Common myeloid progenitor, CD34-positive (primary cell): ENCODE measurements at regions of chr15 and their contacts with region 1.

Region 1: DNA sequence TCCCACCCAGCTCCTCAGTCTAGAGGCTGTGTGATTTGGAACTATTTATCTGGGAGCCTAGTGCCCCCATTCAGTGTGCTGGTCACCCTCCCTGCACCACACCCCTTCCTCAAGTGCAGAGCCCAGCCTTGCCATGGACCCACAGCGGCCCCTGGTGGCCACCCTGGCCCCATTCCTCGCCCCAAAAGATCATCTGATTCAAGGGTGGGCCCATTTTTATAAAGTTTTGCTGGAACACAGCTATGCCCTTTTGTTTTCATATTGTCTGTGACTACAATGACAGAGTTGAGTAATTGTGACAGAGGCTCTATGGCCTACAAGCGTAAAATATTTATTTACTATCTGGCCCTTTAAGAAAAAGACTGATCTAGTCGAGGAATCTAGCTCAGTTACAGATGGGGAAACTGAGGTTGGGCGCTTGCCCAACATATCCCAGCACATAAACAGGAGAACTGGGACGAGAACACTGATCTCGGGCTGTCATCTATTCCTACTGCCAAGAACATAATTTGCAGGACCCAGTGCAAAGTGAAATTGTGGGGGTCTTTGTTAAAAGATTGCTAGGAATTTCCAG is 1.8 kb downstream of the FES start:
- DNase-seq: peak; percentile 79 to 90 (median 86)
- H3K4me3 ChIP-seq: peak overlapping the region in 5 of 7 experiments; percentile 70 to 86 (median 83)
- H3K27ac ChIP-seq: no peak overlapping the region
- H3K4me1 ChIP-seq: peaks cover 0 to 44% (median 40%) of the 10 kb centered on the region in 4 experiments
- H3K27me3 ChIP-seq: no peaks in the 10 kb centered on the region

Region 2: DNA sequence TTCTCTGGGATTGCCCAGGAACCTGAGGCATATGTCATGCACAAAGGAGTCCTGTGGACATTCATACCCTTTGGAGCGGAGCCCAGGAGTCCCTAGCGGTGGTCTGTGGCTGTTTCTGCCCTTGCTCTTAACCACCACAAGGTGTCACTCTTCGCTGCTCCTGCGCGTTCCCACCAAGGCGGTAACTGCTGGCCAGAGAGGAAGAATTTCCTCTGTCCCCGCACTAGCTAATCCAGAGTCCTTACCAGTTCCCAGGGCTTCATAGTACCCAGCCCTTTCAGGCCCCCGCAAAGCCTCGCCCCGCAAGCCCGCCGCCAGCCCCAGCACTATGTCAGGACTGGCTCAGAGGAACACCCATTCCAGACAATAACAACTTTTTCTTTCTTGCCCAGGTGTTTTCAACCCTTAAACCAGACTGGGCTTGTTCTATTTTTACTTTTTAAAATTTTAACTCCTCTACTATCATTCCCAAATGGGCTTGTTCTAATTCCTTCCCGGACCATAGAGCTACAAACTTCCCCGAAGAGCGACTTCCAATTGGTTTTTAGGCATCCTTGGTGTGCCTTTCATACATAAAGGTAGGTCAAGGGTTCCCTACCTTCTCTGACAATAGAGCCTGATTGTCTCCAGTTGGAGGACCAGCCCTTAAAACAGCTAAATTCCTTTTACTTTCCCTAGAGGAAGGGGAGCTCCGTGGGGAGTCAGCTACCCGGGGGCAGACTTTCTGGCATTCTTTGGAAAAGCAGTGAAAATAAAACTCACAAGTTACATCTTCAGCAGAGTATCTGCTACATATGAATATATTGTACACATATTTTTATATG is 565.9 kb before region 1 on chr15:
- CTCF ChIA-PET with region 1: interaction called, 11 read pairs
- POLR2A ChIA-PET with region 1: no interaction called
- DNase-seq: peak; percentile 77 to 87 (median 83)
- H3K4me3 ChIP-seq: peak overlapping the region in 5 of 7 experiments; percentile 27 to 48 (median 35)
- H3K27ac ChIP-seq: no peak overlapping the region
- H3K4me1 ChIP-seq: peaks cover 0 to 5% (median 2%) of the 10 kb centered on the region in 4 experiments
- H3K27me3 ChIP-seq: peaks cover 0 to 2% (median 0%) of the 10 kb centered on the region in 5 experiments

Region 3: GRCh38 chr15:90701880-90702630 is 184.1 kb before region 1 on chr15:
- CTCF ChIA-PET with region 1: interaction called, 24 read pairs
- POLR2A ChIA-PET with region 1: no interaction called
- DNase-seq: peak; percentile 59 to 71 (median 62)
- H3K4me3 ChIP-seq: no peak overlapping the region
- H3K27ac ChIP-seq: no peak overlapping the region
- H3K4me1 ChIP-seq: peaks cover 0 to 32% (median 18%) of the 10 kb centered on the region in 4 experiments
- H3K27me3 ChIP-seq: no peaks in the 10 kb centered on the region

Region 4: DNA sequence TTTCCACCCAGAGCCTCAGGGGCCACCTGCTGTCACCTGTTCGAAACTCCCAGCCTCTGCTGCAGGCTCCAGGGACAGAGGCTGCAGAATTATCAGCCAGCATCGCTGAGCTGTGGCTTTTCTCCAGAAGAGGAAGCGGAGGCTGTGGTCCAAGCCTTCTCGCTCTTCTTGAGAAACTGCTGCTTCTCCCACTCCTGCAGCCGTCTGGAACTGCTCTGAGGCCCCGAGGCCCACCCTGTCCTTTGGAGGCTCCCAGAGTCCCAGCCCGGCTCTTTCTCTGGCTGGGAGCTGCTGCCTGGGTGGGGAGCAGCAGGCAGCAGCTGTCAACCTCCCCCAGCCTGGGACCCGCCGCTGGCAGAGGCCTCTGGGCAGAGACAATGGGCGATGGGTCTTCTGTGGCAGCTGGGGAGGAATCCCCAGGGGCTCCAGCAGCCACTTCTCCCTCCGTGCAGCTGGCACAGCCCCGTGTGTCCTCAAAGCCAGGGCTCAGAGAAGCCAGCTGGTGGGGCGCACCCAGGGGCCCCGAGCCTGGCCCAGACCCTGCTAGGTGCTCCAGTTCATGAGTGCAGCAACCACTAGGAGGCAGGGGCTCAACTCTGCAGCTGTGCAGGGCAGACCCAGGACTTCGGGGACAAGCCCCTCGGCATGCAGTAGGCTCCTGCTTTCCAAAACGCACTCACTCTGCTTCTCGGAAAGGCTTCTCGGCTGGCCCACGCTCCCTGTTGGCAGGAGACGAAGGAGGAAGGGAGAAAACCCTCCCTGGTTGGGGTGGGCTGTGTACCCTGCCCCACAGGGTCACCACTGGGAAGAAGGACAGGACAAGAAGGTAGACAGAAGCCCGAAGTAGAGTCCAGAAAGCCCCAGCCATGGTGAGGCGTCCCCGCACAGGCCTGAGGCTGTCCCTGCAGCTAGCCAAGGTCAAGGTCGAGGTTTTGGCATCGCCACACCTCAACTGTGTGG is 67.6 kb before region 1 on chr15:
- CTCF ChIA-PET with region 1: interaction called, 34 read pairs
- POLR2A ChIA-PET with region 1: interaction called, 6 read pairs
- DNase-seq: peak; percentile 70 to 89 (median 88)
- H3K4me3 ChIP-seq: peak overlapping the region in 4 of 7 experiments; percentile 8 to 49 (median 45)
- H3K27ac ChIP-seq: peak overlapping the region in 1 of 2 experiments; percentile 38
- H3K4me1 ChIP-seq: peaks cover 0 to 55% (median 46%) of the 10 kb centered on the region in 4 experiments
- H3K27me3 ChIP-seq: no peaks in the 10 kb centered on the region

Region 5: GRCh38 chr15:90839187-90840071 is 46.7 kb before region 1 on chr15:
- CTCF ChIA-PET with region 1: interaction called, 27 read pairs
- POLR2A ChIA-PET with region 1: interaction called, 4 read pairs
- DNase-seq: peak; percentile 65 to 89 (median 86)
- H3K4me3 ChIP-seq: peak overlapping the region in 6 of 7 experiments; percentile 45 to 77 (median 58)
- H3K27ac ChIP-seq: peak overlapping the region; percentile 59 to 76
- H3K4me1 ChIP-seq: peaks cover 4 to 52% (median 46%) of the 10 kb centered on the region in 4 experiments
- H3K27me3 ChIP-seq: no peaks in the 10 kb centered on the region

Region 6: GRCh38 chr15:90902040-90902839 is 16.1 kb after region 1 on chr15:
- CTCF ChIA-PET with region 1: interaction called, 25 read pairs
- POLR2A ChIA-PET with region 1: interaction called, 8 read pairs
- DNase-seq: peak; percentile 74 to 82 (median 80)
- H3K4me3 ChIP-seq: peak overlapping the region; percentile 69 to 85 (median 79)
- H3K27ac ChIP-seq: peak overlapping the region; percentile 85 to 93
- H3K4me1 ChIP-seq: peaks cover 2 to 24% (median 20%) of the 10 kb centered on the region in 4 experiments
- H3K27me3 ChIP-seq: no peaks in the 10 kb centered on the region